ENCODE measurements at regions of chrX and their contacts with region 1.

Region 1: DNA sequence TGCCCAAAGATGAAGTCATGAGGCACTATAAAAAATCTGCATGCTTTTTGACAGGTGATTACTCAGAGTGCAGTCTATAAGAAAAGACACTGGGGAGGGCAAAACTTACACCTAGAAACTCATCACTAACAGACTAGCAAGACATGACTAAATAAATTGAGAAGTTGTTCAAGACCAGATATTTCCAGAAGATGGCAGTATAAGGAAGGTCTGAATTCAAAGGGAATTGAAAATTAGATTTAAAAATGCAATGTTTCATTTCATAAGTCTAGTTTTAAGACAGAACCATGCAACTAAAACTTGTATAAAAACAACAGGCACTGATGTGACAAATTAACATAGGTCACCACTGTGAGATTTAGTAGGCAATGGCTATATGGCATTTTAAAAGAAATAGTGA is 232.5 kb upstream of the POF1B start:
- DNase-seq: no peak
- ATAC-seq: no peak
- H3K4me3 ChIP-seq: no peak overlapping the region
- H3K27ac ChIP-seq: no peak overlapping the region
- H3K4me1 ChIP-seq: no peaks in the 10 kb centered on the region
- H3K27me3 ChIP-seq: no peaks in the 10 kb centered on the region
- CTCF ChIP-seq: peak; percentile 30
- EP300 ChIP-seq: no peak
- POLR2A ChIP-seq: no peak
- RAD21 ChIP-seq: no peak

Region 2: DNA sequence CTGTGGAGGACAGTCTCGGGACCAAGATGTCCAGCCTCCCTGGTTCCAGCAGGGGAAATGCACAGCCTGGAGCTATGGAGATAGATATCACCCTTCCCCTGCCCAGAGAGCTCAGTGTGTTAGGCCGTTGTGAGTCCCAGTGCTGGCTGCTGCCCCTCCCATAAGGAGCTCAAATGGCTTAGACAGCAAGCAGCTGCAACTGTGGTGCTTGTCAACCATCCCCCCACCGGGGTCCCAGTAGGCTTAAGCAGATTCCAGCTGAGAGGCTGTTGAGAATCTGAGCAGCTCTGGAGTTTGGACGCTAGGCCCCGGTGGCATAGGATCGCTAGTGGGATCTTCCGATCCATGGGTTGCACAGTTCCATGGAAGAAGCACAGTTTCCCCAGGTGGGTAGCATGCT is 50.7 kb before region 1 on chrX:
- CTCF ChIA-PET with region 1: no interaction called
- POLR2A ChIA-PET with region 1: no interaction called
- in situ Hi-C with region 1: no loop called
- intact Hi-C with region 1: no loop called
- DNase-seq: no peak
- ATAC-seq: no peak
- H3K4me3 ChIP-seq: no peak overlapping the region
- H3K27ac ChIP-seq: no peak overlapping the region
- H3K4me1 ChIP-seq: no peaks in the 10 kb centered on the region
- H3K27me3 ChIP-seq: no peaks in the 10 kb centered on the region
- CTCF ChIP-seq: no peak
- EP300 ChIP-seq: no peak
- POLR2A ChIP-seq: no peak
- RAD21 ChIP-seq: no peak

Region 3: DNA sequence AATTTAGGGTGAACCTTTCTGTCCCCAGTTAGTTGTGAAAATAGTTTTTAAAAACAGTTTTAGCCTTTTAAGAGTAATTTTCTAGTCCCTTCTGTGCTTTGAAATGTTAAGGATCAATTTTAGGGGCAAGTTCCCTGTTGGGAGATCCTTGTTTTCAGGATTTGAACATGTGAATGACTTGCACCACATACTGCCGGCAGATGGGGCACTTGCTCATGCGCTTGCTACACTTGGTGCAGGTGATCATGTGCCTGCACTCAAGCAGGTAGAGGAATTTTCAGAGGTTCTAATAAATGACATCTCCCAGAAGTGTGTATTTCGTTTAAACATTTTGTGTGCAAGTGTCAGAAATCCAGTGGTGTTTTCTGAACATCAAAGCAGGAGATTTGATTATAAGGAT is 239.5 kb after region 1 on chrX:
- CTCF ChIA-PET with region 1: no interaction called
- POLR2A ChIA-PET with region 1: no interaction called
- in situ Hi-C with region 1: no loop called
- intact Hi-C with region 1: loop called (anchors 10 kb)
- DNase-seq: peak; percentile 14
- ATAC-seq: peak; percentile 89
- H3K4me3 ChIP-seq: no peak overlapping the region
- H3K27ac ChIP-seq: no peak overlapping the region
- H3K4me1 ChIP-seq: no peaks in the 10 kb centered on the region
- H3K27me3 ChIP-seq: no peaks in the 10 kb centered on the region; a peak in 1 of 5 replicates
- CTCF ChIP-seq: peak; percentile 70
- EP300 ChIP-seq: no peak
- POLR2A ChIP-seq: no peak
- RAD21 ChIP-seq: no peak

Region 4: DNA sequence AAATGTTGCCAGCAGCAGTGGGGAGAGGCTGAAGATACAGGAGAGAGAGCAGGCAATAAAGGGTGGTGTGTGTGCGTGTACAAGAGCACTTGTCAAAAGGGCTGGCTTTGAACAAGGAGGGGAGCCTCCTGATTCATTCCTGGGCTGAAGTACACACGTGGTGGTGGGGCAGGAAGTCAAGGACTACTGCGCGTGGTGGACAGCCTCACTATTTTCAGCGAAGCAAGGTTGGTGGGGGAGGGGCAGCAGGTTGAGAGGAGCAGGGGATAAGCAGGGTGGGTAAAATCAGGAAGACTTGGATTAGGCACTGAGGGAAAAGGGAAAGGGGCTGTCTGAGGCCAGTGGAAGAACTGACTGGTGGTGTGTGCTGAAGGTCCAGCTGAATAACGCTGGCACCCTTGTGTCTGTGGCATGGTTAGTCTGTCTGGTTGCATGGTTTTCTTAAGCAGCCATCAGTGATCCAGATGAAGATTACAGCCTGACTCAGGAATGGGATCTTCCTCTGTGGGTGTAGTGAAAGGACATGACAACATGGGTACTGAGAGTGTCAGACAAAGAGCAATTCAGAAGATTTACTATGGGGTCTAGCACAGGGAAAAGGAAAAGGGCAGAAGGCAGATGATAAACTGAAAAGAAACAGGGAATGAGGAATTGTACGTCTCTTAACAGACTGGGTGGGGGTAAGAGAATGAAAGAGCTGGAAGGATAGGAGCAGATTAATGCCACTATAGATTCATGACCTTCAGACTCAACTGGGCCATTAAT is 285.6 kb after region 1 on chrX:
- CTCF ChIA-PET with region 1: no interaction called
- POLR2A ChIA-PET with region 1: no interaction called
- in situ Hi-C with region 1: no loop called
- intact Hi-C with region 1: no loop called
- DNase-seq: no peak
- ATAC-seq: no peak
- H3K4me3 ChIP-seq: no peak overlapping the region
- H3K27ac ChIP-seq: no peak overlapping the region
- H3K4me1 ChIP-seq: no peaks in the 10 kb centered on the region
- H3K27me3 ChIP-seq: no peaks in the 10 kb centered on the region
- CTCF ChIP-seq: no peak
- EP300 ChIP-seq: no peak
- POLR2A ChIP-seq: no peak
- RAD21 ChIP-seq: no peak

Region 5: DNA sequence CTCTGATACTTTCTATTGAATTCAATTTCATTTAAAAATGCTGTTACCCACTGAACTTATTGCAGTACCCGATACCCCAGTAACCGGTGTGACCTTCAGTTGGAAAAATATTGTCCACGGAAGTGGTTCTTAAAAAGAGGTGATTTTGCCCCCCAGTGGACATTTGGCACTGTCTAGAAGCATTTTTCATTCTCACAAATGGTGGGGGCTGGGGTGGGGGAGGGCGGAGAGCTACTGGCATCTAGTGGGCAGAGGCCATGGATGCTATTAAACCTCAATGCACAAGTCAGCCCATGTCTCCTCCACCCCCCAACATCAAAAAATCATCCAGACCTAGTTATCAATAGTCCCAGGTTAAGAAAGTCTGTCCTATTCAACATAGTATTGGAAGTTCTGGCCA is 455.1 kb after region 1 on chrX:
- CTCF ChIA-PET with region 1: no interaction called
- POLR2A ChIA-PET with region 1: no interaction called
- in situ Hi-C with region 1: no loop called
- intact Hi-C with region 1: loop called (anchors 10 kb)
- DNase-seq: peak; percentile 40
- ATAC-seq: peak; percentile 83
- H3K4me3 ChIP-seq: no peak overlapping the region
- H3K27ac ChIP-seq: no peak overlapping the region
- H3K4me1 ChIP-seq: no peaks in the 10 kb centered on the region
- H3K27me3 ChIP-seq: no peaks in the 10 kb centered on the region
- CTCF ChIP-seq: peak; percentile 30
- EP300 ChIP-seq: no peak
- POLR2A ChIP-seq: no peak
- RAD21 ChIP-seq: 0 out of 2 replicates have a peak, but pooled peaks have one; percentile 20

Region 6: GRCh38 chrX:86148024-86148511 is 536.1 kb after region 1 on chrX and contains the start of gene DACH2:
- CTCF ChIA-PET with region 1: no interaction called
- POLR2A ChIA-PET with region 1: no interaction called
- in situ Hi-C with region 1: no loop called
- intact Hi-C with region 1: no loop called
- DNase-seq: peak; percentile 40
- ATAC-seq: peak; percentile 100
- H3K4me3 ChIP-seq: peak within 1 kb of the TSS; percentile 30 to 71 (median 56); a peak in 5 of 6 replicates
- H3K27ac ChIP-seq: no peak within 1 kb of the TSS
- H3K4me1 ChIP-seq: peaks cover 6% of the 10 kb centered on the region; the same call in 1 of the 2 replicates
- H3K27me3 ChIP-seq: peaks cover 0 to 16% of the 10 kb centered on the region in 2 experiments; a peak in 1 of 5 replicates
- CTCF ChIP-seq: no peak; the same call in none of the 2 replicates
- EP300 ChIP-seq: no peak
- POLR2A ChIP-seq: no peak
- RAD21 ChIP-seq: no peak
- total RNA-seq, gene DACH2: not detected in 2 replicates

Region 7: DNA sequence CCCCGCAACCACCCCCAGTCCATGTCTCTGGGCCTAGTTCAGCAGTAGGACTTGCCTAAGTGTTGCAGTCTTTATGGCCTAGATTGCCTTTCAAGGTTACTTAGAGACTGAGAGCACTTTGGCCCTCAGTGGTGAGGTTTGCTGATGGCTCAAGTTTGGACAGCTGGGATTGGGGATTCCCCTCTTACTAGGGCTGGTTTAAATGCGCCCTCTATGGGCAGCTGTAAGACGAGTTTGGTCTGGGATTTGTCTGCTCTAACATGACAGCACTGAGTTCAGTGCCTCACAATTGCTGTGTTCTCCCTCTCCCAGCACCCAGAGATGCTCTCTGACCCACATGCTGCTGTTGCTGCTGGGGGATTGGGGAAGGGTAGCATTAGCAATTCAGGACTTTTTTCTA is 559.4 kb after region 1 on chrX:
- CTCF ChIA-PET with region 1: no interaction called
- POLR2A ChIA-PET with region 1: no interaction called
- in situ Hi-C with region 1: no loop called
- intact Hi-C with region 1: loop called (anchors 5 kb)
- DNase-seq: peak; percentile 35
- ATAC-seq: peak; percentile 87
- H3K4me3 ChIP-seq: no peak overlapping the region
- H3K27ac ChIP-seq: no peak overlapping the region
- H3K4me1 ChIP-seq: no peaks in the 10 kb centered on the region
- H3K27me3 ChIP-seq: no peaks in the 10 kb centered on the region
- CTCF ChIP-seq: peak; percentile 70
- EP300 ChIP-seq: no peak
- POLR2A ChIP-seq: no peak
- RAD21 ChIP-seq: no peak

Measured in HepG2 (cell line).